SK-N-SH (cell line): ENCODE measurements at regions of chr11 and their contacts with region 1.

Region 1: DNA sequence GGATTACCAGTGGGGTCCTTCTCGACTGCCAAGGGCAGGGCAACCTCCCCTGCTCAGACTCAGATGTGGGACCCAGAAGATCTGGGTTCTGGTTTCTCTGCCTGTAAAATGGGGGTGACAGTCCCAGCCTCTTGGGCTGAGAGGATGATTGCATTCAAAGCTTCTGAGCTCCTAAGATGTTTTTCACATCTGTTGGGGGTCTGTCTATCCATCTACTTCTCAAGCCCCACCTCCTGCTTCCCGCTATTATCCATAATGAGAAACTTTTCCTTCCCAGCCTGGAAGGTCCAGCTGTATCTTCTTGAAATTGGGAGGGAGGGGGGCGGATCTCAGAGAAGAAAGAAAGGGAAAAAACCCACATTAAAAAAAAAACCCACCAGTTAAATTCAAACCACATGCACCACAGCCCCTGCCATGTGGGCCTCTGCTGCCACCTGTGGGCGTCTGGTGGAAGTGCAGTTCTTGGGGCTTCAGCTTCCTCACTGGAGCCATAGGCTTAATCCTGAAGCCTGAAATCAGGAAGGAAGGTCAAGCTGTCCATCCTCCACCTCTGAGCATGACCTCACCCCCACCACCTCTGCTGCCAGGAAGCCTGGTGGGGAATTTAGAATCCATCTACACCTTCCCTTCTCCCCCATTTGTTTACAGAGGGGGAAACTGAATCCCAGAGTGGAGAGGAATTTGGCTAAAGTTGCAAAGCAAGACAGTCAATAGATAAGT is 27.3 kb downstream of the ARHGEF17 start:
- DNase-seq: peak; percentile 83
- H3K4me3 ChIP-seq: peak overlapping the region; percentile 1 to 7; a peak in 2 of 4 replicates
- H3K27ac ChIP-seq: peak overlapping the region; percentile 97 to 98
- H3K4me1 ChIP-seq: peaks cover 48 to 58% of the 10 kb centered on the region in 2 experiments
- H3K27me3 ChIP-seq: no peaks in the 10 kb centered on the region
- CTCF ChIP-seq: peak; percentile 99
- EP300 ChIP-seq: no peak; a peak in 1 of 4 replicates
- RAD21 ChIP-seq: peak; percentile 98

Region 2: DNA sequence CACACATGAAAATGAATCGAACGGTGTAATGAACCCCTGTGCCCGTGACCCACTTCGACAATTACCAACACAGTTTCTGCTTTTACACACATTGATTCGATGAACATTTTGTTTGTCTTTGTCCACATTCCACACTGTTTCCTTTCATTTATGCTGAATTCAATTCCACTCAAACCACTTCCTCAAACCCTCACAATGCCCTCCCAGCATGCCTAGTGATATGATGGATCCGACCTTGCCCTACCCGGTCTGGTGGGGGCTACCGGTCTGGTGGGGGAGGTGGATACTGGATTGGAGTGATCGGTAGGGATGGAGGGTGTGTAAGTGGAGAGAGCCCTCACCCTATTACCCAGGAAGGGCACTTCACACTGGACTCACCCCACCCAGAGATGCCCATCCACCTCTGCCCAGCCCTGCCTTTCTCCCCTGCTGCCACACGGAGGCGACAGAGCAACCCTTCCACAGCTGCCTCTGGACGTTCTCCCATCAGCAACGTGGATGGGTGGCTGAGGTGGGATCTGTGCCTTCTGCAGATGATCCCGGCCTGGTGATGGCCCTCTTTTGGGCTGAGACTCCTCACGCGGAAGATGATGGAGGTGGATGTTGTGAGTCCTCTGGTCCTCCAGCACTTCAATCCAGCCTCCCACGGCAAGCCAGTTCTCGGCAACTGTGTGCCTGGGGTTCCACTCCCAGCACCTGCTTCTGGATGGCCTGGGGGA is 150.3 kb before region 1 on chr11:
- CTCF ChIA-PET with region 1: interaction called, 16 read pairs
- POLR2A ChIA-PET with region 1: no interaction called
- DNase-seq: peak; percentile 77
- H3K4me3 ChIP-seq: no peak overlapping the region; a peak in 1 of 4 replicates
- H3K27ac ChIP-seq: no peak overlapping the region
- H3K4me1 ChIP-seq: peaks cover 0 to 12% of the 10 kb centered on the region in 2 experiments; a peak in 3 of 4 replicates
- H3K27me3 ChIP-seq: no peaks in the 10 kb centered on the region
- CTCF ChIP-seq: peak; percentile 71
- EP300 ChIP-seq: no peak
- RAD21 ChIP-seq: peak; percentile 74

Region 3: GRCh38 chr11:73265853-73266645 is 69.3 kb before region 1 on chr11:
- CTCF ChIA-PET with region 1: interaction called, 11 read pairs
- POLR2A ChIA-PET with region 1: no interaction called
- DNase-seq: no peak
- H3K4me3 ChIP-seq: no peak overlapping the region
- H3K27ac ChIP-seq: no peak overlapping the region
- H3K4me1 ChIP-seq: peaks cover 0 to 25% of the 10 kb centered on the region in 2 experiments; a peak in 2 of 4 replicates
- H3K27me3 ChIP-seq: no peaks in the 10 kb centered on the region
- CTCF ChIP-seq: no peak
- EP300 ChIP-seq: no peak
- RAD21 ChIP-seq: no peak

Region 4: GRCh38 chr11:73307323-73308002 is 27.9 kb before region 1 on chr11:
- CTCF ChIA-PET with region 1: interaction called, 395 read pairs
- POLR2A ChIA-PET with region 1: interaction called, 19 read pairs
- DNase-seq: peak; percentile 97
- H3K4me3 ChIP-seq: peak overlapping the region; percentile 76 to 86
- H3K27ac ChIP-seq: peak overlapping the region; percentile 93 to 97
- H3K4me1 ChIP-seq: peaks cover 35 to 40% of the 10 kb centered on the region in 2 experiments
- H3K27me3 ChIP-seq: no peaks in the 10 kb centered on the region
- CTCF ChIP-seq: peak; percentile 90
- EP300 ChIP-seq: peak in 1 of 2 experiments; percentile 39; a peak in 1 of 4 replicates
- RAD21 ChIP-seq: peak; percentile 96

Region 5: DNA sequence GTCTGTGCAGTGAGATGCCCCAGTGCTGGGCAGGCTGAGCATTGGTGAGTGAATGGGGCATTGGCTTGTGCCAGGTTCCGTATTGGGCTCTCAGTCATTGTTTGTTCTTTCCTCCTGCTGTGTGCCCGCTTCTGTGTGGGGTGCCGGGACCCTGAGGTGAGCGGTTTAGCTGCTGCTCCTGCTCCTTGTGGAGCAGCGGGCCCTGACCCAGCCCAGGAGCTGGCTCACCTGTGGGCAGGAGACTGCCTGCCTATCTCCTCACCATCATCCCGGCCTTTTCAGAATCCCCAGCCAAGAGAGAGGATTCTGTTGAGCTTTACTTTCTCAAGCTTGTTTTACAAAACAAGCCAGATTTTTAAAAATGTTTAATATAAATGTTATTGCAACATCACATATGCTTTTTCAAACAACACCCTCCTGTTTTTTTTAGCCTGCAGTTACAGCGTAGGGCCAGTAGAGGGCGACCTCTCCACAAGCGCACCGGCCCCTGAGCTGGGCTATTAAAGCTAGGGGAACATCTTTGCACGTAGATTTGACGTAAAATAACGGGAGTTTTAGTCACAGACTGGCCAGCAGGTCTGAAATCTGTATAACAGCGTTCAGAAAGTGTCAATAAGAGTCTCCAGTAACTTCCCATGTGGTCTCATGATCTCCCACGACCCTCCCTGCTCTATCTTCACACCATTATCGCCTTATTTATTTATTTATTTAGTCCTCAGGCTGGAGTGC is 15.7 kb after region 1 on chr11:
- CTCF ChIA-PET with region 1: interaction called, 61 read pairs
- POLR2A ChIA-PET with region 1: no interaction called
- DNase-seq: peak; percentile 90
- H3K4me3 ChIP-seq: no peak overlapping the region; a peak in 1 of 4 replicates
- H3K27ac ChIP-seq: no peak overlapping the region
- H3K4me1 ChIP-seq: no peaks in the 10 kb centered on the region; a peak in 1 of 4 replicates
- H3K27me3 ChIP-seq: no peaks in the 10 kb centered on the region
- CTCF ChIP-seq: peak; percentile 99
- EP300 ChIP-seq: no peak
- RAD21 ChIP-seq: peak; percentile 79

Region 6: GRCh38 chr11:73376160-73376802 is 40.9 kb after region 1 on chr11 and contains the start of gene RELT:
- CTCF ChIA-PET with region 1: interaction called, 12 read pairs
- POLR2A ChIA-PET with region 1: no interaction called
- DNase-seq: peak; percentile 99
- H3K4me3 ChIP-seq: peak within 1 kb of the TSS; percentile 67 to 87
- H3K27ac ChIP-seq: peak within 1 kb of the TSS; percentile 64 to 71
- H3K4me1 ChIP-seq: peaks cover 3 to 19% of the 10 kb centered on the region in 2 experiments; a peak in 1 of 4 replicates
- H3K27me3 ChIP-seq: no peaks in the 10 kb centered on the region
- CTCF ChIP-seq: peak; percentile 73
- EP300 ChIP-seq: no peak
- RAD21 ChIP-seq: peak; percentile 53
- polyA plus RNA-seq, gene RELT: 4.3 and 5.5 TPM in 2 replicates